PC-3 (cell line): ENCODE measurements at regions of chr7 and their contacts with region 1.

Region 1: GRCh38 chr7:142508258-142508689 is 241.0 kb upstream of the PRSS1 start:
- DNase-seq: peak; percentile 93
- ATAC-seq: peak; percentile 89
- H3K4me3 ChIP-seq: no peak overlapping the region
- H3K27ac ChIP-seq: peak overlapping the region; percentile 94
- H3K4me1 ChIP-seq: peaks cover 50% of the 10 kb centered on the region
- H3K27me3 ChIP-seq: no peaks in the 10 kb centered on the region
- CTCF ChIP-seq: no peak

Region 2: GRCh38 chr7:141915565-141915964 is 592.7 kb before region 1 on chr7:
- CTCF ChIA-PET with region 1: no interaction called
- POLR2A ChIA-PET with region 1: no interaction called
- intact Hi-C with region 1: no loop called
- DNase-seq: peak; percentile 49
- ATAC-seq: no peak
- H3K4me3 ChIP-seq: no peak overlapping the region
- H3K27ac ChIP-seq: no peak overlapping the region
- H3K4me1 ChIP-seq: no peaks in the 10 kb centered on the region
- H3K27me3 ChIP-seq: peaks cover 15% of the 10 kb centered on the region; the same call in 1 of the 2 replicates
- CTCF ChIP-seq: no peak

Region 3: GRCh38 chr7:142485617-142486226 is 22.6 kb before region 1 on chr7:
- CTCF ChIA-PET with region 1: interaction called, 13 read pairs
- POLR2A ChIA-PET with region 1: interaction called, 10 read pairs
- intact Hi-C with region 1: no loop called
- DNase-seq: no peak
- ATAC-seq: no peak
- H3K4me3 ChIP-seq: no peak overlapping the region
- H3K27ac ChIP-seq: no peak overlapping the region
- H3K4me1 ChIP-seq: peaks cover 5% of the 10 kb centered on the region
- H3K27me3 ChIP-seq: no peaks in the 10 kb centered on the region
- CTCF ChIP-seq: peak; percentile 49

Region 4: GRCh38 chr7:142496545-142497041 is 11.7 kb before region 1 on chr7:
- CTCF ChIA-PET with region 1: interaction called, 6 read pairs
- POLR2A ChIA-PET with region 1: no interaction called
- intact Hi-C with region 1: loop called (anchors 1 kb)
- DNase-seq: peak; percentile 73
- ATAC-seq: peak; percentile 74
- H3K4me3 ChIP-seq: peak overlapping the region; percentile 28; the same call in 1 of the 2 replicates
- H3K27ac ChIP-seq: no peak overlapping the region
- H3K4me1 ChIP-seq: peaks cover 9% of the 10 kb centered on the region; the same call in 1 of the 2 replicates
- H3K27me3 ChIP-seq: no peaks in the 10 kb centered on the region
- CTCF ChIP-seq: peak; percentile 86

Region 5: DNA sequence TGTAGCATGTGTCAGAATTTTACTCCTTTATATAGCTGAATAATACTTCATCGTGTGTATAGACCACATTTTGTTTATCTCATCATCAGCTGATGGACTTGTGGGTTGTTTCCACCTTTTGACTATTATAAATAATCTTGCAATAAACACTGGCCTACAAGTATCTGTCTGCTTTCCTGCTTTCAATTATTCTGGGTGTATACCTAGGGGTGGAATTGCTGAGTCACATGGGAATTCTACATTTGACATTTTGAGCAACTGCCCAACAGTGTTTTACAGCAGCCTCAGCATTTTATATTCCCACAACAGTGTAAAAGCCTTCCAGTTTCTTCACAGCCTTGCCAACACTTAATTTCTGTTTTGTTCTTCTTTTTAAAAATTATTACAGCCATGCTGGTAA is 40.7 kb after region 1 on chr7:
- CTCF ChIA-PET with region 1: no interaction called
- POLR2A ChIA-PET with region 1: no interaction called
- intact Hi-C with region 1: no loop called
- DNase-seq: no peak
- ATAC-seq: peak; percentile 38; the same call in 1 of the 2 replicates
- H3K4me3 ChIP-seq: no peak overlapping the region
- H3K27ac ChIP-seq: no peak overlapping the region
- H3K4me1 ChIP-seq: peaks cover 19% of the 10 kb centered on the region
- H3K27me3 ChIP-seq: no peaks in the 10 kb centered on the region
- CTCF ChIP-seq: no peak